Sigmoid colon (tissue), 7 donors: ENCODE measurements at regions of chr3 and their contacts with region 1.

Region 1: GRCh38 chr3:128322066-128323022 is 144.3 kb downstream of the DNAJB8 start:
- DNase-seq: peak; percentile 73
- H3K4me3 ChIP-seq: no peak overlapping the region
- H3K27ac ChIP-seq: no peak overlapping the region
- H3K4me1 ChIP-seq: peaks cover 0 to 3% (median 0%) of the 10 kb centered on the region in 4 donors
- H3K27me3 ChIP-seq: no peaks in the 10 kb centered on the region
- CTCF ChIP-seq: peak in 3 of 4 experiments; percentile 6 to 47 (median 34)
- EP300 ChIP-seq: no peak
- POLR2A ChIP-seq: no peak

Region 2: GRCh38 chr3:128011140-128011539 is 311.2 kb before region 1 on chr3:
- intact Hi-C with region 1: no loop called
- DNase-seq: no peak
- H3K4me3 ChIP-seq: no peak overlapping the region
- H3K27ac ChIP-seq: no peak overlapping the region
- H3K4me1 ChIP-seq: no peaks in the 10 kb centered on the region
- H3K27me3 ChIP-seq: peaks cover 0 to 40% (median 6%) of the 10 kb centered on the region in 3 donors
- CTCF ChIP-seq: no peak
- EP300 ChIP-seq: no peak
- POLR2A ChIP-seq: no peak

Region 3: DNA sequence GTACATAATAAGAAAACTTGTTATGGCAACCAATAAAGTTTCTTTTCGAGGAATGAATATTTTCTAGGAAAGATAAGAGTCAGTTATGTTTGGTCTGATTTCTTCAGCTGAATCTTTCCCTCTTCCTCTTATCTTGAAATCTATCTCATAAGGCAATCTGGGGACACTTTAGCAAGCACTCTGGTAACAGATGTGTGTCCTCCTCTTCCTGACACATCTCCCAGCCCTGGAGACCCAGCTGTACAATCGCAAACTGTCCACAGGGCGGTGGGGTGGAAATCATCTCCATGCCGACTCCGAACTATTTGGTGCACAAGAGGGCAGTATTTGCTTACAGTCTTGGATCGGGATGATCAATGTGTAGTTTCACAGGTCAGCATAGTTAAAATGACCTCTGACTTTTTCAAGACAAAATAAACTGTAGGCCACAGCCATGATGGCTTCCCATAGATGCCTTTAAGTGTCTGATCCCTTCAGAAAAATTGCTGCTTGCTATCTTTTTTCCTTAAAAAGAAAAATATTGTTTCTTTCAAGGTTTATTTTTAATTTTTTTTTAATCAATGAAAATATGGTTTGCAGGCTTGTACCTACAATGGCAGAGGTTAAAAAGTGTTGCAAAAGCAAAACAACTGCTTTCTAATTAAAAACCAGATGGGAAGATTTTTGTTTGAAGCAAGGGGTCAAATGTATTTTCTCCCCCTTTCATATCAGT is 151.4 kb before region 1 on chr3:
- intact Hi-C with region 1: loop called (anchors 2 kb)
- DNase-seq: peak; percentile 85
- H3K4me3 ChIP-seq: no peak overlapping the region
- H3K27ac ChIP-seq: no peak overlapping the region
- H3K4me1 ChIP-seq: peaks cover 0 to 18% (median 0%) of the 10 kb centered on the region in 4 donors
- H3K27me3 ChIP-seq: no peaks in the 10 kb centered on the region
- CTCF ChIP-seq: peak; percentile 57 to 83 (median 68)
- EP300 ChIP-seq: no peak
- POLR2A ChIP-seq: no peak

Region 4: GRCh38 chr3:128549283-128550112 is 227.2 kb after region 1 on chr3:
- intact Hi-C with region 1: no loop called
- DNase-seq: no peak
- H3K4me3 ChIP-seq: no peak overlapping the region
- H3K27ac ChIP-seq: peak overlapping the region in 1 of 4 donors; percentile 51
- H3K4me1 ChIP-seq: no peaks in the 10 kb centered on the region
- H3K27me3 ChIP-seq: peaks cover 0 to 5% (median 2%) of the 10 kb centered on the region in 3 donors
- CTCF ChIP-seq: no peak
- EP300 ChIP-seq: peak in 1 of 4 donors; percentile 27
- POLR2A ChIP-seq: no peak